Activated CD8-positive, alpha-beta T cell treated with anti-CD3 and anti-CD28 coated beads, Interleukin-2, amount 10 ng/mL, durations not matched to agents 7 days and 5 days (primary cell): ENCODE measurements at regions of chr2 and their contacts with region 1.

Region 1: GRCh38 chr2:88055371-88056128 is at the start of gene KRCC1:
- DNase-seq: peak; percentile 95
- ATAC-seq: peak; percentile 97
- H3K4me3 Mint-ChIP-seq: peak within 1 kb of the TSS; percentile 98
- H3K27ac Mint-ChIP-seq: peak within 1 kb of the TSS; percentile 98
- H3K4me1 Mint-ChIP-seq: peaks cover 56% of the 10 kb centered on the region
- H3K27me3 Mint-ChIP-seq: no peaks in the 10 kb centered on the region
- total RNA-seq, gene KRCC1: 18.9 to 20.4 TPM

Region 2: DNA sequence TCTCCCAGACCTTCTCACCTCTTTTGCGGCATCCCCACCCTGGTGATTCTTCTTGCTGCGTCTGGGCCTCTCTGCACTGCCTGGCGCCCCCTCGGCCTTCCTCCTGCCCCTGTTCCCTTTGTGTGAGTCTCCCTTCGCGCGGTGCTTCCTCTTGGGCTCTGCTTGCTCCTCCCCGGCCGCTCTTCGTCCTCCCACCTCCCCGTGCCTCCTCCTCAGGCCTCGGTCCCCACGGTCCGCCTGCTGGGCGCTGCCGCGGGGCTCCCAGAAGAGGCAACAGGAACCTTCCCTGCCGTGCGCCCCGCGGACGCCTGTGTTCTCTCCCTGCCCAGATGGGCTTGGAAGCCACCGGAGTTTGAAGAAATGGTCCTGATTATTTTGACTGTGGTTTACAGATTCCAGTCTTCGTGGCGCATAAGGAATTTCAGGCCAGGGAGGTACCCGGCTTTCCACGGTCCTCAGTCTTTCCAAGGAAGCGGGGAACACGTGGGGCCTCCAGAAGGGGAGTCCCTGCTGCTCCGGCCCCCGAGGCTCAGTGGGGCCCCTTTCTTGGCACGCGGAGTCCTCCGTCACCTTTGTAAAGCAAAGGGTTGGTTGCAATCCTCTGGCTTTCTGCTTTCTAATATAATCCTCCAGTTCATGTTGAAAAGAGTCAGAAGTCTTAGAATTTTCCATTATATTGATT is 52.3 kb before region 1 on chr2:
- CTCF ChIA-PET with region 1: interaction called, 15 read pairs
- POLR2A ChIA-PET with region 1: no interaction called
- DNase-seq: no peak
- ATAC-seq: no peak
- H3K4me3 Mint-ChIP-seq: no peak overlapping the region
- H3K27ac Mint-ChIP-seq: no peak overlapping the region
- H3K4me1 Mint-ChIP-seq: peaks cover 5% of the 10 kb centered on the region
- H3K27me3 Mint-ChIP-seq: peaks cover 3% of the 10 kb centered on the region

Region 3: GRCh38 chr2:88038263-88039105 is 17.1 kb before region 1 on chr2:
- CTCF ChIA-PET with region 1: interaction called, 14 read pairs
- POLR2A ChIA-PET with region 1: no interaction called
- DNase-seq: no peak
- ATAC-seq: no peak
- H3K4me3 Mint-ChIP-seq: no peak overlapping the region
- H3K27ac Mint-ChIP-seq: no peak overlapping the region
- H3K4me1 Mint-ChIP-seq: no peaks in the 10 kb centered on the region
- H3K27me3 Mint-ChIP-seq: no peaks in the 10 kb centered on the region

Region 4: GRCh38 chr2:88082781-88083180 is 27.2 kb after region 1 on chr2:
- CTCF ChIA-PET with region 1: interaction called, 11 read pairs
- POLR2A ChIA-PET with region 1: no interaction called
- DNase-seq: no peak
- ATAC-seq: no peak
- H3K4me3 Mint-ChIP-seq: no peak overlapping the region
- H3K27ac Mint-ChIP-seq: no peak overlapping the region
- H3K4me1 Mint-ChIP-seq: no peaks in the 10 kb centered on the region
- H3K27me3 Mint-ChIP-seq: no peaks in the 10 kb centered on the region

Region 5: DNA sequence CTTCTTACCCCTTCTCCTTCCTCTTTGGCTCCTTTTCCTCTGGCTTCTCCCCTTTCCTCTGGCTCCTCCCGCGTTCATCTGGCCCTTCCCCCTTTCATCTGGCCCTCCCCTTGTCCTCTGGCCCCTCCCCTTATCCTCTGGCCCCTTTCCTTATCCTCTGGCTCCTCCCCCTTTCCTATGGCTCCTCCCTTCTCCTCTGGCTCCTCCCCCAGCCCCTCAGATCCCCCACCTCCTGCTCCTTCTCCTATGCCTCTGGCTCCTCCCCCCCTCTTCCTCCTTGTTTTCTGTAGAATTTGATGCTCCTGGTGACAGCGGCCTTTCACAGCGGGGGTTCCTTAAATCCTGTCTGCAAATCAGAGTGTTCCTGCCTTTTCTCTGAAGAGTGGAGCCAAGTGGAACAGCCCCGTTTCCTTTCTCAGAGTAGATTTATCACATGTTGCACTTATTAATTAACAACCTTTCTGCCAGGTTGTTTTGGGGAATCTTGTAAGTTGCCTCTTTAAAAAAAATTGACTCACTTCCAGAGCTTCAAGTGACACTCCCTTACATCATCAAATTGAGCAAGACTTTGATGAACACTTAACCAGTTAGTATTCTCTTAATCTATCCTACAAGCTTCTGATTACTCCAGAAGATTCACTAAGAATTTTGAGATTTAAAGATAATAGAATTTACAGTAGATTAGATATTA is 44.4 kb after region 1 on chr2:
- CTCF ChIA-PET with region 1: interaction called, 13 read pairs
- POLR2A ChIA-PET with region 1: interaction called, 3 read pairs
- DNase-seq: no peak
- ATAC-seq: no peak
- H3K4me3 Mint-ChIP-seq: no peak overlapping the region
- H3K27ac Mint-ChIP-seq: no peak overlapping the region
- H3K4me1 Mint-ChIP-seq: no peaks in the 10 kb centered on the region
- H3K27me3 Mint-ChIP-seq: peaks cover 2% of the 10 kb centered on the region

Region 6: DNA sequence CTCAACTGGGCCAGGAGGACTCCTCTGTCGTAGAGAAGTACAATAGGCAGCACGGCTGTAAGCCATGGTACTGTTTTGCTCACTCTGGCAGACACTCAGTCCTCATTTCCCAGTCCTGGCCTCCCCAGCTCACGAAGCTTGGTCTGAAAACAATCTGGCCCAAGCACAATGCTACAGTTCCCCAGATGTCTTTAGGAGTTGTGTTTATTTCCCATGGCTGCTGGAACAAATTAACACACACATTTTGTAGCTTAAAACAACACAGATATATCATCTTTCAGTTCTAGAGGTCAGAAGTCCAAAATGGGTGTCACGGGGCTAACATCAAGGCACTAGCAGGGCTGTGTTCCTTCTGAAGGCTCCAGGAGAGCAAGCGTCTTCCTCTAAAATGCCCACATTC is 59.3 kb after region 1 on chr2:
- CTCF ChIA-PET with region 1: no interaction called
- POLR2A ChIA-PET with region 1: no interaction called
- DNase-seq: no peak
- ATAC-seq: no peak
- H3K4me3 Mint-ChIP-seq: no peak overlapping the region
- H3K27ac Mint-ChIP-seq: no peak overlapping the region
- H3K4me1 Mint-ChIP-seq: no peaks in the 10 kb centered on the region
- H3K27me3 Mint-ChIP-seq: no peaks in the 10 kb centered on the region

Region 7: DNA sequence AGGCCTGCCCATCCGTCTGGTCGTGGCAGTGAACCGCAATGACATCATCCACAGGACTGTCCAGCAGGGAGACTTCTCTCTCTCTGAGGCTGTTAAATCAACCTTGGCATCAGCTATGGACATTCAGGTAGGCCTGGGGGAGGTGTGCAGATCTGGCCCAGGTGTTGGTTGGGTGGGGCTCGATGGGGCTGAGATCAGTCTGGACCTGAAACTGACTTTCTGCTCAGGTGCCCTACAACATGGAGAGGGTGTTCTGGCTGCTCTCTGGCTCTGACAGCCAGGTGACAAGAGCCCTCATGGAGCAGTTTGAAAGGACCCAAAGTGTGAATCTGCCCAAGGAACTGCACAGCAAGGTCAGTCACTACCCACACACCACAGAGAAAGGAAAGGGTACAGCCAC is 127.2 kb after region 1 on chr2:
- CTCF ChIA-PET with region 1: interaction called, 10 read pairs
- POLR2A ChIA-PET with region 1: no interaction called
- DNase-seq: no peak
- ATAC-seq: no peak
- H3K4me3 Mint-ChIP-seq: no peak overlapping the region
- H3K27ac Mint-ChIP-seq: no peak overlapping the region
- H3K4me1 Mint-ChIP-seq: peaks cover 31% of the 10 kb centered on the region
- H3K27me3 Mint-ChIP-seq: no peaks in the 10 kb centered on the region